Activated B cell treated with CpG ODN at 0.5 μM for 24 hours (primary cell): ENCODE measurements at regions of chr19 and their contacts with region 1.

Region 1: DNA sequence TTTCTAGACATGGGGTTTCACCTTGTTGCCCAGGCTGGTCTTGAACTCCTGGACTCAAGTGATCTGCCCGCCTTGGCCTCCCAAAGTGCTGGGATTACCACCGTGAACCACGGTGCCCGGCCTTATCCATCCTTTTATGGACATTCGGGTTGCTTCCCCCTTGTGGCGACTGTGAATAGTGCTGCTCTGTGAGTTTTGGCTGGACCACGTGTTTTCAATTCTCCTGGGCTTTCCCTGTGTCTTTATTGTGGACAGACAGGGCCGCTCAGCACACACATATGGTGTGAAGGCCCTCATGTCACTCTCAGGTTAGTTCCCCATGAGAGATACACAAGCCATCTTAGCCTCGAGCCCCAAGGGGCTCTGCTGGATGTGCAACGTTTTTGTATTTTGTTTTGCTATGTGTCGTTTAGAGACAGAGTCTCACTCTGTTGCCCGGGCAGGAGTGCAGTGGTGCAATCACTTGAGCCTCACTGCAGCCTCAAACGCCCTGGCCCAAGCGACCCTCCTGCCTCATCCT is 40.5 kb downstream of the MAU2 start:
- DNase-seq: peak; percentile 54
- ATAC-seq: peak; percentile 68
- H3K4me3 Mint-ChIP-seq: peak overlapping the region; percentile 74
- H3K27ac Mint-ChIP-seq: peak overlapping the region; percentile 57
- H3K4me1 Mint-ChIP-seq: peaks cover 23% of the 10 kb centered on the region
- H3K27me3 Mint-ChIP-seq: no peaks in the 10 kb centered on the region
- CTCF ChIP-seq: peak; percentile 87

Region 2: GRCh38 chr19:19145684-19146608 is 215.2 kb before region 1 on chr19:
- CTCF ChIA-PET with region 1: interaction called, 5 read pairs
- POLR2A ChIA-PET with region 1: interaction called, 3 read pairs
- intact Hi-C with region 1: loop called (anchors 1 kb)
- DNase-seq: peak; percentile 92
- ATAC-seq: peak; percentile 93
- H3K4me3 Mint-ChIP-seq: no peak overlapping the region
- H3K27ac Mint-ChIP-seq: no peak overlapping the region
- H3K4me1 Mint-ChIP-seq: peaks cover 5% of the 10 kb centered on the region
- H3K27me3 Mint-ChIP-seq: no peaks in the 10 kb centered on the region
- CTCF ChIP-seq: no peak

Region 3: DNA sequence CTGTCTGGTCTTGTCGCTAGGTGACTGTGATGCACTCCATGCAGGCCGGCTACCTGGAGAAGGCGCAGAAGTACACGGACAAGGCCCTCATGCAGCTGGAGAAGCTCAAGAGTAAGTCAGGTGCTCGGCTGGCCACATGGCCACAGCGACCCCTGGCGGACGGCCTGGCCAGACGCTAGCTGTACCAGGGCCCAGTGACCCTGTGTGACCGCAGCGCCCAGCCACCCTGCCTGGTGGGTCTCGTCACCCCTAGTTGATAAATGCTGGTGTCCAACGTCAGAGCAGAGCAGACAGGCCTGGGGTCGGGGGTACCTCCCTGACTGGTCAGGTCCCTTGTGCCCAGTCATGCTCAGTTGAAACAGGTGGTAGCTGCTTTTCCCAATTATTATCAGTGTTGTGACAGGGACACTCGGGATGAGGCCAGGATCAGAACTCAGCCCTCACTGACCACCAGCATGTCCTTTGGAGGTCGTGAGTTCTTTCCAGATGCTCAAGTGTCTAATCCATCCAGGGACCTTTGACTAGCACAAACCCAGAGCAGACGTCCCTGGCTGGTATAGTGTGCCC is 18.3 kb before region 1 on chr19:
- CTCF ChIA-PET with region 1: no interaction called
- POLR2A ChIA-PET with region 1: no interaction called
- intact Hi-C with region 1: no loop called
- DNase-seq: no peak
- ATAC-seq: peak; percentile 28
- H3K4me3 Mint-ChIP-seq: no peak overlapping the region
- H3K27ac Mint-ChIP-seq: no peak overlapping the region
- H3K4me1 Mint-ChIP-seq: no peaks in the 10 kb centered on the region
- H3K27me3 Mint-ChIP-seq: no peaks in the 10 kb centered on the region
- CTCF ChIP-seq: no peak

Region 4: GRCh38 chr19:19372656-19373416 is 11.7 kb after region 1 on chr19:
- CTCF ChIA-PET with region 1: interaction called, 6 read pairs
- POLR2A ChIA-PET with region 1: interaction called, 12 read pairs
- intact Hi-C with region 1: no loop called
- DNase-seq: no peak
- ATAC-seq: peak; percentile 98
- H3K4me3 Mint-ChIP-seq: peak overlapping the region; percentile 69
- H3K27ac Mint-ChIP-seq: peak overlapping the region; percentile 94
- H3K4me1 Mint-ChIP-seq: peaks cover 12% of the 10 kb centered on the region
- H3K27me3 Mint-ChIP-seq: no peaks in the 10 kb centered on the region
- CTCF ChIP-seq: no peak

Region 5: GRCh38 chr19:19385108-19385899 is 24.2 kb after region 1 on chr19:
- CTCF ChIA-PET with region 1: interaction called, 5 read pairs
- POLR2A ChIA-PET with region 1: interaction called, 19 read pairs
- intact Hi-C with region 1: loop called (anchors 1 kb)
- DNase-seq: peak; percentile 98
- ATAC-seq: peak; percentile 89
- H3K4me3 Mint-ChIP-seq: peak overlapping the region; percentile 87
- H3K27ac Mint-ChIP-seq: peak overlapping the region; percentile 83
- H3K4me1 Mint-ChIP-seq: peaks cover 43% of the 10 kb centered on the region
- H3K27me3 Mint-ChIP-seq: no peaks in the 10 kb centered on the region
- CTCF ChIP-seq: no peak